ENCODE measurements at regions of chr18 and their contacts with region 1.

Region 1: GRCh38 chr18:46226461-46226860 is 122.3 kb downstream of the HAUS1 start:
- DNase-seq: peak; percentile 51
- ATAC-seq: peak; percentile 63
- H3K4me3 ChIP-seq: no peak overlapping the region
- H3K27ac ChIP-seq: no peak overlapping the region
- H3K4me1 ChIP-seq: no peaks in the 10 kb centered on the region
- H3K27me3 ChIP-seq: no peaks in the 10 kb centered on the region
- CTCF ChIP-seq: no peak
- POLR2A ChIP-seq: no peak
- RAD21 ChIP-seq: no peak

Region 2: GRCh38 chr18:45879681-45880655 is 346.5 kb before region 1 on chr18:
- CTCF ChIA-PET with region 1: no interaction called
- POLR2A ChIA-PET with region 1: no interaction called
- dilution Hi-C with region 1: no loop called
- in situ Hi-C with region 1: no loop called
- intact Hi-C with region 1: no loop called
- DNase-seq: peak; percentile 65
- ATAC-seq: peak; percentile 98
- H3K4me3 ChIP-seq: no peak overlapping the region
- H3K27ac ChIP-seq: no peak overlapping the region
- H3K4me1 ChIP-seq: no peaks in the 10 kb centered on the region
- H3K27me3 ChIP-seq: no peaks in the 10 kb centered on the region
- CTCF ChIP-seq: peak; percentile 96
- POLR2A ChIP-seq: no peak
- RAD21 ChIP-seq: peak; percentile 93

Region 3: GRCh38 chr18:47163241-47163640 is 936.8 kb after region 1 on chr18:
- CTCF ChIA-PET with region 1: interaction called, 12 read pairs
- POLR2A ChIA-PET with region 1: no interaction called
- dilution Hi-C with region 1: no loop called
- in situ Hi-C with region 1: no loop called
- intact Hi-C with region 1: no loop called
- DNase-seq: peak; percentile 87
- ATAC-seq: peak; percentile 93
- H3K4me3 ChIP-seq: no peak overlapping the region
- H3K27ac ChIP-seq: no peak overlapping the region
- H3K4me1 ChIP-seq: peaks cover 2% of the 10 kb centered on the region; the same call in 1 of the 2 replicates
- H3K27me3 ChIP-seq: no peaks in the 10 kb centered on the region
- CTCF ChIP-seq: no peak
- POLR2A ChIP-seq: no peak
- RAD21 ChIP-seq: no peak

Measured in IMR-90 (cell line).